ENCODE measurements at regions of chr7 and their contacts with region 1.

Region 1: DNA sequence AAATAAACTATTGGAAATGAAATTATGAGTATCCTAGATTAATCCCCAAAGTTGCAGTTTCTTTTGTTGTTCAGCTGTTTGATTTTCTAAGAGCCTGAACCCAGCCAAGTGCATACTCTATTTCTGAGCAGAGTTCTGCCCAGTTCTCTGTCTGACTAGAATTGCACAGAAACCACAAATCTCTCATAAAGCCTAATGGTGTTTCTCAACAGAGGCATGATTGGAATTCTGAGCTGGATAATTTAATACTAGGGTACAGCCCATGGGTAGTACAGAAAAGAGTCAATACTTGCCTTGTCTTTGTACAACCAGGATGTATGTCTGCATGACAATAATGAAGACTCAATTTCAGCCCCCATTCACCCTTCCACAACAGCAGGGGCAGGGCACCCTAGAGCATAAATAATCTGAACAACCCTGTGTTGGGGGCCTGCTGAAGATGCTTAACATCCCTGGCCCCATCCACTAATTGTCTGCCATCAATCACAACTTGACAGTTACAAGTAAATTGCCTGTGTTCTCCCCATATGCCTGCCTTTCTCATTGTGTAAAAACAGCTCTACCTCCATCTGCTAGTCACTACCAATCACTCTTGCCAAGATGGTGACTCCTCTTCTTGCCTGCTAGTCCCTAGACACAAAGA is 114.4 kb downstream of the NPSR1 start:
- DNase-seq: no peak
- H3K4me3 ChIP-seq: no peak overlapping the region
- H3K27ac ChIP-seq: no peak overlapping the region
- H3K4me1 ChIP-seq: no peaks in the 10 kb centered on the region
- H3K27me3 ChIP-seq: no peaks in the 10 kb centered on the region
- CTCF ChIP-seq: no peak
- POLR2A ChIP-seq: no peak

Region 2: GRCh38 chr7:34734771-34735170 is 37.6 kb before region 1 on chr7:
- intact Hi-C with region 1: loop called (anchors 2 kb)
- DNase-seq: no peak
- H3K4me3 ChIP-seq: no peak overlapping the region
- H3K27ac ChIP-seq: no peak overlapping the region
- H3K4me1 ChIP-seq: no peaks in the 10 kb centered on the region
- H3K27me3 ChIP-seq: no peaks in the 10 kb centered on the region
- CTCF ChIP-seq: no peak
- POLR2A ChIP-seq: no peak